Dorsolateral prefrontal cortex (tissue), 120 donors: ENCODE measurements at regions of chr2 and their contacts with region 1.

Region 1: DNA sequence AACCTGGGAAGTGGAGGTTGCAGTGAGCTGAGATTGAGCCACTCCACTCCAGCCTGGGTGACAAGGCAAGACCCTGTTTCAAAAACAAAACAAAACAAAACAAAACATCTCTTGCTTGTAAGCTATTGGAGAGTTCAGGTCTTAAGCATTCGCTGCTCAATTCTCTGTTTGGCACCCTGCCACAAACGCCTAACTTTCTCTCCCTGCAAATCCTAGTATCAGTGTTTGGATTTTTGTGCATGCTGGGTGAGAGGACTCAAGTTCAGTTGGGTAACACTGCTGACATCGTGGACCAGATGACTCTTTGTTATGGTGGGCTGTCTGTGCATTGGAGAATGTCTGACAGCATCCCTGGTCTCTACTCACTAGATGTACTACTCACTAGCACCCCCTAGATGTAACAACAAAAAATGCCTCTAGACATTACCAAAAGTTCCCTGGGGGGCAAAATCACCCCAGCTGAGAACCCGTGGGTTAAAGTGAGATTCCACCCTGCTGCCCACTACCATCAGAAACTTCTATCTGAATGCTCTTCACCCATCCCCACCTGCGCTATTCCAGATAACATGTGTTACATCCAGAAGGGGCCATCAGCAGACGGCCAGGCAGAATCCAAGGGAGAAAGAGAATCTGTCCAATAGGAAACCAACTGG is 50.9 kb downstream of the CACNB4 start:
- DNase-seq: no peak
- H3K4me3 ChIP-seq: no peak overlapping the region
- H3K27ac ChIP-seq: peak overlapping the region in 2 of 59 donors; percentile 14 to 55
- H3K27me3 ChIP-seq: no peaks in the 10 kb centered on the region
- CTCF ChIP-seq: peak in 32 of 56 donors; percentile 8 to 44 (median 26)

Region 2: GRCh38 chr2:151869291-151869690 is 178.7 kb before region 1 on chr2:
- intact Hi-C with region 1: no loop called
- DNase-seq: peak in 2 of 10 donors; percentile 37 to 45
- H3K4me3 ChIP-seq: no peak overlapping the region
- H3K27ac ChIP-seq: no peak overlapping the region
- H3K27me3 ChIP-seq: no peaks in the 10 kb centered on the region
- CTCF ChIP-seq: no peak

Region 3: DNA sequence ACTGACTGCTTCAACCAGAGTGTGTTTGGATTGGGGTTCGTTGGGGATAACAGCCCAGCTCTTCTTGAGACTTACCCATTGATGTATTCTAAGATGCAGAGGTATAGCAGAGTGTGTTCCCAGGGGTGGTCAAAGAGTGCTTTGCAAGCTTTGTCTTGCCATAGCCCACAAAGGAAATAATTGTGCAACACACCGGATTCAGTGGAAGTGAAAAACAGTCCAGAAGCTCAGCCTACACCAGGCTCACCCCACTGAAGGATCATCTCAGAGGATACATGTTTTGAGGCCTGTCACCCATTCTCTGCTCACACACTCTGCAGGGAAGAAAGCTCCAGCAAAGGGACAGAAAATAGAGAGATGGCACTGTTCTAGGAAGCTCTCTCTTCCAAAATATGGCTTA is 41.3 kb after region 1 on chr2:
- intact Hi-C with region 1: loop called in 1 of 2 experiments (anchors 5 kb)
- DNase-seq: no peak
- H3K4me3 ChIP-seq: peak overlapping the region in 1 of 59 donors; percentile 4
- H3K27ac ChIP-seq: no peak overlapping the region
- H3K27me3 ChIP-seq: no peaks in the 10 kb centered on the region
- CTCF ChIP-seq: no peak